Psoas muscle (tissue), 8 donors: ENCODE measurements at regions of chr10 and their contacts with region 1.

Region 1: GRCh38 chr10:75235375-75236177 is at the start of gene COMTD1:
- DNase-seq: peak; percentile 92 to 97
- ATAC-seq: peak; percentile 84 to 88 (median 86)
- H3K4me3 ChIP-seq: peak within 1 kb of the TSS; percentile 89
- H3K27ac ChIP-seq: peak within 1 kb of the TSS; percentile 91
- H3K4me1 ChIP-seq: no peaks in the 10 kb centered on the region
- H3K27me3 ChIP-seq: no peaks in the 10 kb centered on the region
- CTCF ChIP-seq: peak; percentile 100
- total RNA-seq, gene COMTD1: 15.2 to 38.8 (median 21.2) TPM

Region 2: GRCh38 chr10:74244097-74244685 is 991.4 kb before region 1 on chr10:
- intact Hi-C with region 1: loop called in 1 of 2 experiments (anchors 5 kb)
- DNase-seq: no peak
- ATAC-seq: no peak
- H3K4me3 ChIP-seq: no peak overlapping the region
- H3K27ac ChIP-seq: no peak overlapping the region
- H3K4me1 ChIP-seq: no peaks in the 10 kb centered on the region
- H3K27me3 ChIP-seq: no peaks in the 10 kb centered on the region
- CTCF ChIP-seq: peak; percentile 51

Region 3: DNA sequence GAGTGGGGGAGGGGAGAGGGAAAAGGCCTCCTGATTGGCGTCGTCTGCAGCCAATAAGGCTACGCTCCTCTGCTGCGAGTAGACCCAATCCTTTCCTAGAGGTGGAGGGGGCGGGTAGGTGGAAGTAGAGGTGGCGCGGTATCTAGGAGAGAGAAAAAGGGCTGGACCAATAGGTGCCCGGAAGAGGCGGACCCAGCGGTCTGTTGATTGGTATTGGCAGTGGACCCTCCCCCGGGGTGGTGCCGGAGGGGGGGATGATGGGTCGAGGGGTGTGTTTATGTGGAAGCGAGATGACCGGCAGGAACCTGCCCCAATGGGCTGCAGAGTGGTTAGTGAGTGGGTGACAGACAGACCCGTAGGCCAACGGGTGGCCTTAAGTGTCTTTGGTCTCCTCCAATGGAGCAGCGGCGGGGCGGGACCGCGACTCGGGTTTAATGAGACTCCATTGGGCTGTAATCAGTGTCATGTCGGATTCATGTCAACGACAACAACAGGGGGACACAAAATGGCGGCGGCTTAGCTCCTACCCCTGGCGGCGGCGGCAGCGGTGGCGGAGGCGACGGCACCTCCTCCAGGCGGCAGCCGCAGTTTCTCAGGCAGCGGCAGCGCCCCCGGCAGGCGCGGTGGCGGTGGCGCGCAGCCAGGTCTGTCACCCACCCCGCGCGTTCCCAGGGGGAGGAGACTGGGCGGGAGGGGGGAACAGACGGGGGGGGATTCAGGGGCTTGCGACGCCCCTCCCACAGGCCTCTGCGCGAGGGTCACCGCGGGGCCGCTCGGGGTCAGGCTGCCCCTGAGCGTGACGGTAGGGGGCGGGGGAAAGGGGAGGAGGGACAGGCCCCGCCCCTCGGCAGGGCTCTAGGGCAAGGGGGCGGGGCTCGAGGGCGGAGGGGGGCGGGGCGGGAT is 409.2 kb before region 1 on chr10 and contains the start of gene KAT6B:
- intact Hi-C with region 1: loop called in 1 of 2 experiments (anchors 10 kb)
- DNase-seq: peak; percentile 100
- ATAC-seq: peak; percentile 86 to 91 (median 87)
- H3K4me3 ChIP-seq: peak within 1 kb of the TSS; percentile 95
- H3K27ac ChIP-seq: peak within 1 kb of the TSS; percentile 97
- H3K4me1 ChIP-seq: peaks cover 49% of the 10 kb centered on the region
- H3K27me3 ChIP-seq: no peaks in the 10 kb centered on the region
- CTCF ChIP-seq: peak; percentile 17
- total RNA-seq, gene KAT6B: 16.9 to 21.3 (median 18.8) TPM

Region 4: DNA sequence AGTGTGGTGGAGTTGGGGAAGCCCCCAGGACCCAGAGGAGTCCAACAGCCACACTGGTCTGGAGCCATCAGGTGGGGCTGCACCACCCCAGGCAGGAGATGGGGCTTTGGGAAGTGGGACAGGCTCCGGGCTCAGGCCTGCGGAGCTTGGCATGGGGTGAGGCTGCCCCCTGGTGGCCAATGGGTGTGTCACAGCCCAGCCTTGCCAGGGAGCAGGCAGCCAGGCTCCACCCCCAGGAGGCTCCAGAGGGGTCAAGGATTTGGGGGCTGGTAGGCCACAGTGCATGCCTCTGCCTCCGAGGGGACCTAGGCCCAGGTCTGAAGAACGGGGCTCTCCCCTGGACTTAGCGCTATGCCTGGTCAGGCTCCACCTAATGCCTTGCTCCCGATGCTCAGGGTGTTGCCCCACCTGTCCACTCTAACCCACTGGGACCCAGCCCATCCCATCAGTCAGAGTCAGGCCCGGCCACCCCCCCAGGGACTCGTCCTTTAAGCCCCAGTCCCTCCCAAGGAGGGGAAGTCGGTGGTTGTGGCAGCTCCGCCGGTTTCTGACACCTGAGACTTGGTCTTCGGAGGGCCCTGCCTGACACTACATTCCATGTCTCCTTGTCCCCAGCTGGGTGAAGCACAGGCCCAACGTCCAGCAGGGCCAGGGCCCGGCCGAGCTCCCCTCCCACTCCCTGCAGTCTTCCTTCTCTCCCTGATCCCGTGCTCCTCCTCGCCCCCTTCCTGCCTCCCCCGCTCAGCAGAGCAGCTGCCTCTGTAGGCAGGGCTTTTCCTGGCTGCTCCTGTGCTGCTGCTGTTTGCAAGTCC is 135.4 kb before region 1 on chr10:
- intact Hi-C with region 1: loop called (anchors 5 kb)
- DNase-seq: peak; percentile 80 to 91
- ATAC-seq: peak; percentile 79 to 84 (median 80)
- H3K4me3 ChIP-seq: peak overlapping the region; percentile 16
- H3K27ac ChIP-seq: peak overlapping the region; percentile 99
- H3K4me1 ChIP-seq: peaks cover 55% of the 10 kb centered on the region
- H3K27me3 ChIP-seq: no peaks in the 10 kb centered on the region
- CTCF ChIP-seq: peak; percentile 99

Region 5: DNA sequence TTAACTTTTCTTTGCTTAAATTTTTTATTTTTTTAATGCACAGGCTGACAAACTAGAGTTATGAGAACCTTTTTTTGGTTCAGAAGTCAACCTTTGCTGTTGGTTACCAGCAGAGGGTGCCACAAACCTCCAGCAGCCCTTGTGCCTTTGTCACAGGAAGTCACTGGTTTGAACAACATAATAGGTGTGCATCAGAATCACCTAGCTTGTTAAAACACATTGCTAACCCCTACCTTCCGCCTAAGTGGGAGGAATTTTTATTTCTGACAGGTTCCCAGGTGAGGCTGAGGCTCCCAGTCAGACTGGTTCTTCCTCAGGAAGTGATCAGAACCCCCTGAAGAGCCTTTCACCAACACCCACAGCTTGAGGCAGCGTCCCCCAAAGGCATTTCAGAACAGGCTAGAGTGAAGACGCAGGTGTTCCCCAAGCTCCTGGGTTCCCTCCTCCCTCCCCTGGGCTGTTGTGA is 47.6 kb before region 1 on chr10:
- intact Hi-C with region 1: loop called (anchors 1 to 5 kb)
- DNase-seq: peak in 1 of 2 donors; percentile 35
- ATAC-seq: peak; percentile 58 to 75 (median 68)
- H3K4me3 ChIP-seq: no peak overlapping the region
- H3K27ac ChIP-seq: peak overlapping the region; percentile 39
- H3K4me1 ChIP-seq: no peaks in the 10 kb centered on the region
- H3K27me3 ChIP-seq: no peaks in the 10 kb centered on the region
- CTCF ChIP-seq: peak; percentile 71